PC-3 (cell line): ENCODE measurements at regions of chr3 and their contacts with region 1.

Region 1: DNA sequence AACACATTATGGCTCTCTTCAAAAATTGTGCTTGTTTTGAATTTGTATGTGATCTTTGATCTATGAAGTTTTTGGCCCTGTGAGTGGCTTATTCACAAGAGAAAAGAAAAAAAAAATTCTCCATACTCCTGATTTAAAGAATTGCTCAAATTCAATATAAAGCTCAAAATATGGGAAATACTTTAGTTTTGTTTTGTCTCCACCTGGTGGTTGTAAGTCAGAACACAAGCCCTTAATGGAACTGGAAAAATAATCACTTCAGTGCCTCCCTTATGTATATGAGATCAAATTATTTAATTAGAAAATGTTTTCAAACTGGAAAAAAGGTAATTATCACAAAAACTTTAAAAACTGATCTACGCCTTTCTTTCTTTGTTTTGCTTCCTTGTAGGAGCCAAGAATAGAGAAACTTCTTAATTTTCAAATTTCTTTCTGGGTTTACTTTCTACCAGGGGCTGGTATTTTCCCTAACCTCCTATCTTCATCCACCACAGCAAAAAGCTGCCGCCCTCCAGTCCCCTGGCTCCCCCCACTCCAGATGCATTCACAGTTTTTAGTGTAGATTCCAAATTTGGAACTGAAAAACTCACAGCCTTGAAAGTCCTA is 50.6 kb downstream of the SERP1 start:
- DNase-seq: peak; percentile 85
- ATAC-seq: peak; percentile 15
- H3K4me3 ChIP-seq: no peak overlapping the region
- H3K27ac ChIP-seq: no peak overlapping the region
- H3K4me1 ChIP-seq: peaks cover 38% of the 10 kb centered on the region
- H3K27me3 ChIP-seq: no peaks in the 10 kb centered on the region
- CTCF ChIP-seq: peak; percentile 91

Region 2: DNA sequence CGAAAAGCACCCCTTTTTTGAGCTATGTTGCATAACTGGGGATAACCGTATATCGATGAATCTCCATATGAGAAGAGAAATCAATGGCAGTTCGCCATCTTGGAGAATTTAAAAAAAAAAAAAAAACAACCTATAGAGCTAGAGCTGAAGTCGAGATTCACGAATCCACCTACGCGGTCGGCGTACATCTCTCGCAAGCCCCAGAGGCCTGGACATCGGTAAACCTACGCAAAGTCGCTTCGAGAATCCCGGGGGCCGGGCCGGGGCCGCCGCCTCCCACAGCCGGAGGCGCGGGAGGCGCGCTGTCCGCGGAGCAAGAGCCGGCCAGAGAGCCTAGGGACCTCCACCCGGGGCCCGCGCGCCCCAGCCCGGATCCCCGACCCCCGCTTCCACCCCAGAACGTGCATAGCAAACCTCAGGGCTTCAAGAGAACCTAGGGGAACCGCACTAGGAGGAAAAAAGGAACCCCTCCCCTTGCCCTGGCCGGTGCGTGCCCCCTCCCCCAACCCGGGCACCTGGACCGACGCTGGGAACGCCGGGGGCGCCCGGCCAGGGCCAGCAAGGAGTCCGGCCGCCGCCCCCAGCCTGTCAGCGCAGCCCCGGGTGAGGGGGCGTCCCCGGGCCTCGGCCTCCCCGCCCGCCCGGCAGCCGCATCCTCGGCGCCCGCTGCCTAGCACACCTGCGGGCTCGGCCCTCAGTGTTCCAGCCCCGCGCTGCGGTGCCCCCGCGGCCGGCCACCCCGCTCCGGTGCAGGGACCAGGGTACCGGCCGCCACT is 525.5 kb before region 1 on chr3:
- CTCF ChIA-PET with region 1: no interaction called
- POLR2A ChIA-PET with region 1: no interaction called
- intact Hi-C with region 1: loop called (anchors 10 kb)
- DNase-seq: peak; percentile 75
- ATAC-seq: peak; percentile 27
- H3K4me3 ChIP-seq: peak overlapping the region; percentile 79
- H3K27ac ChIP-seq: peak overlapping the region; percentile 86
- H3K4me1 ChIP-seq: peaks cover 31% of the 10 kb centered on the region
- H3K27me3 ChIP-seq: no peaks in the 10 kb centered on the region
- CTCF ChIP-seq: no peak

Region 3: GRCh38 chr3:150238998-150239619 is 256.6 kb before region 1 on chr3:
- CTCF ChIA-PET with region 1: interaction called, 10 read pairs
- POLR2A ChIA-PET with region 1: no interaction called
- intact Hi-C with region 1: loop called (anchors 1 kb)
- DNase-seq: peak; percentile 77
- ATAC-seq: peak; percentile 40
- H3K4me3 ChIP-seq: peak overlapping the region; percentile 61
- H3K27ac ChIP-seq: peak overlapping the region; percentile 95
- H3K4me1 ChIP-seq: peaks cover 46% of the 10 kb centered on the region
- H3K27me3 ChIP-seq: no peaks in the 10 kb centered on the region
- CTCF ChIP-seq: peak; percentile 96

Region 4: DNA sequence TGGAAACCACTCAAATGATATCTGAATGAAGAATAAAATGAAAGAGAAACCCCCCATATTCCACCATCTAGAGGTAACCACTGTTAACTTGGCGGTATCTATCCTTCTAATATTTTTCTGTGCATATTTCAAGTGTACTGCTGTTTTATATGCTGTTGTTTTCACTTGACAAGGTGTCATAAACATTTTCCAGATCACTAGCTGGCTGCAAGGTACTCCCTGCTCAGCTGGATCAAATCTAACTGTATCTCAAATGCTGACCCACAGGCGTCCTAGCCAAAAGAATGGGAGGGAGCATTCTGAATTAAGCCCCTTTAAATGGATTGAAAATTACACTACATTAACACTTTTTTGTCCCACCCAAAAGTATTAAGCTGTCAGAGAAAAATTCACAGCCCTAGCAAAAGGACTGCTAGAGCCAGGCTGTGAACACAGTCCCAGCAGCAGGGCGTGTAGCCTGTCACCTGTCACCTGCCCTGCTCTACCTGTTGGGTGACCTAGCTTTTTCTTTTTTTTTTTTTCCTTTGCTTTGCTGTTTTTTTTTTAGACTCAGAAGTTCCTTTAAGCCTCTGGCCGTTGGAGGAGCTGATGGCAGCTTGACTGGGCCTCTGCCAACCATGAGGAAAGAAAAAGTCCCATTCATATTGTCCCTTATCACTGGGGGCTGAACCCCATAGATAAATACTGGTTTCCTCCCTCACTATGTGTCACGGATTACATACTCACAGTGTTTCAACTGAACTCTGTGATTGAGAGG is 181.2 kb before region 1 on chr3:
- CTCF ChIA-PET with region 1: no interaction called
- POLR2A ChIA-PET with region 1: no interaction called
- intact Hi-C with region 1: loop called (anchors 5 kb)
- DNase-seq: peak; percentile 61
- ATAC-seq: peak; percentile 8; the same call in 1 of the 2 replicates
- H3K4me3 ChIP-seq: no peak overlapping the region
- H3K27ac ChIP-seq: peak overlapping the region; percentile 4; the same call in 1 of the 2 replicates
- H3K4me1 ChIP-seq: peaks cover 62% of the 10 kb centered on the region
- H3K27me3 ChIP-seq: no peaks in the 10 kb centered on the region
- CTCF ChIP-seq: no peak

Region 5: DNA sequence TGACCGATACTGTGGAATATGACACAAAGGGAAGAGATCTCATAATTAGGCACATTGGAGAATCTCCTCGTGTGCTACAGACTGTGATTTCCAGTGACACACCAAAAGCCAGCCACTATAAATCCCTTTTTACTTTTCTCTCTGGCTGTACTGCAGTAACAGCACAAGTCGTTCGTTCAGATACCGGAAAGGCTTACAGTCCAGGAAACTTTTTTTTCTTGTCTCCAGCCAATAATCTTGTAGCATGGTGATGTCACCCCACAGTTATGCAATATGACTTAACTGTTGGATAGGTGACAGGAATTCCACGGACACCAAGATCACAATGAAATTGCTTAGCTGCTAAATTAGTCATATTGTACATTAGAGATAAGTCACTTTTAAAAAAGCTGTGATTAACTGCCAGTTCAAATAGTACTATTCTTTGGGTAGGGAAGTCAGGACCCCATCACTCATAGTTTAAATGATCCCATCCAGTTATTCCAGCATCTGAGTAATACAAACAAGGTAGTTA is 123.9 kb before region 1 on chr3:
- CTCF ChIA-PET with region 1: no interaction called
- POLR2A ChIA-PET with region 1: no interaction called
- intact Hi-C with region 1: loop called (anchors 1 kb)
- DNase-seq: peak; percentile 100
- ATAC-seq: peak; percentile 69
- H3K4me3 ChIP-seq: peak overlapping the region; percentile 63
- H3K27ac ChIP-seq: peak overlapping the region; percentile 84
- H3K4me1 ChIP-seq: peaks cover 49% of the 10 kb centered on the region
- H3K27me3 ChIP-seq: no peaks in the 10 kb centered on the region
- CTCF ChIP-seq: no peak

Region 6: GRCh38 chr3:150414258-150414657 is 81.4 kb before region 1 on chr3:
- CTCF ChIA-PET with region 1: interaction called, 22 read pairs
- POLR2A ChIA-PET with region 1: interaction called, 3 read pairs
- intact Hi-C with region 1: loop called (anchors 1 kb)
- DNase-seq: peak; percentile 67
- ATAC-seq: no peak; the same call in 1 of the 2 replicates
- H3K4me3 ChIP-seq: peak overlapping the region; percentile 87
- H3K27ac ChIP-seq: peak overlapping the region; percentile 65
- H3K4me1 ChIP-seq: peaks cover 49% of the 10 kb centered on the region
- H3K27me3 ChIP-seq: no peaks in the 10 kb centered on the region
- CTCF ChIP-seq: no peak

Region 7: DNA sequence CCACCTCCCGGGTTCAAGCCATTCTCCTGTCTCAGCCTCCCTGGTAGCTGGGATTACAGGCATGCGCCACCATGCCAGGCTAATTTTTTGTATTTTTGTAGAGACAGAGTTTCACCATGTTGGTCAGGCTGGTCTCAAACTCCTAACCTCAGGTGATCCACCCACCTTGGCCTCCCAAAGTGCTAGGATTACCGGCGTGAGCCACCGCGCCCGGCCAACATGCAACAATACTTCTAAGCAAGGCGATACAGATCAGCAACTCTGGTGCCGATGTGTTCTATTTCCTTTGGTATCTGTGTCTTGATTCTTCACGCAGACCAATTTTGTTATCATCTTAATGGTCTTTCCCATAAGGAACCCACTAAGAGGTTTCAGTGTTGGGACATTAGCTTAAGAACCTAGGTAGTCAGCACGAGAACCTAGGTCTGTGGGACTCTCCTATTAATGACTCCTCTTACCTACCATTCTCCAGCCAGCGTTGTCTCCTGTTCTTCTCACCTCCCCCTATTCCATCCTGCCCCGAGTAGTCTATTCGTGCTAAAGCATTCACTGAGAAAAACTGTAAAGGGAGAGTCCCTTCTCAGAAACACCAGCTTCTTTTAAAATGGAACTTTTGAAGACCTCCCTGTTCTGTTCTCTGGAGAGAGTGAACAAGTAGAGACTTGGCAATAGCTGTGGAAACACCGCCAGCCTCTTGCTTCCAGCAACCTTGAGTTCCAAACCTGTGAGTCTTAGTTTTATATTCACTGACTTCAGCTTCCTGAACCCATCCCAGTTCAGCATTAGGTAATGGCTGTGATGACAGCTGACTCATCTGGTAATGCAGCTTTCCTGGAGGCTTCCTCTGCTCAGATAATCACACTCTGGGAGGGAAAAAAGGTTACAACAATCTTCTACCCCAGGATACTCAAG is 26.4 kb before region 1 on chr3:
- CTCF ChIA-PET with region 1: interaction called, 7 read pairs
- POLR2A ChIA-PET with region 1: no interaction called
- intact Hi-C with region 1: loop called (anchors 1 kb)
- DNase-seq: peak; percentile 98
- ATAC-seq: peak; percentile 84
- H3K4me3 ChIP-seq: peak overlapping the region; percentile 64
- H3K27ac ChIP-seq: peak overlapping the region; percentile 99
- H3K4me1 ChIP-seq: peaks cover 38% of the 10 kb centered on the region
- H3K27me3 ChIP-seq: no peaks in the 10 kb centered on the region
- CTCF ChIP-seq: no peak